H1 (cell line): ENCODE measurements at regions of chr12 and their contacts with region 1.

Region 1: DNA sequence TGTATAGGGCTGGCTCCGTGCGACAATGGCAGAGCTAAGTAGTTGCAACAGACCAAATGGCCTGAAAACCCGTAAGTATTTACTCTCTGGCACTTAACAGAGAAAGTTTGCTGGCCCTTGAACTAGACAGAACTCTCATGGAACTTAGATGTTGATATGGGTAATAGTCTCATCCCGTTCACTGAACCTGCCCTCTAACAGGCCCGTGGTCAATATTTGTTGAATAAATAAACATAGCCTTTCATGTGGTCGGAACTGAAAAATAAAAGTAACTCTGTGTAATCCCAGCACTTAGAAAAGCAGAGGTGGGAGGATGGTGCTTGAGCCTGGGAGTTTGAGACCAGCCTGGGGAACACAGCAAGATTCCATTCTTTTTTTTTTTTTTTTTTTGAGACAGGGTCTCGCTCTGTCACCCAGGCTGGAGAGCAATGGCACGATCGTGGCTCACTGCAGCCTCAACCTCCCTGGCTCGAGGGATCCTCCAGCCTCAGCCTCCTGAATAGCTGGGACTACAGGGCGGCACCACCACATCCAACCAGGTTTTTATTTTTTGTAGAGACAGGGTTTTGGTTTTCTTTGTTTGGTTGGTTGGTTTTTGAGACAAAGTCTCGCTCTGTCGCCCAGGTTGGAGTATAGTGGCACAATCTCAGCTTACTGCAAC is 29.7 kb downstream of the KDM2B start:
- DNase-seq: no peak
- H3K4me3 ChIP-seq: no peak overlapping the region
- H3K27ac ChIP-seq: no peak overlapping the region
- H3K4me1 ChIP-seq: peaks cover 0 to 3% (median 0%) of the 10 kb centered on the region in 4 experiments; a peak in 1 of 7 replicates
- H3K27me3 ChIP-seq: no peaks in the 10 kb centered on the region
- CTCF ChIP-seq: no peak
- EP300 ChIP-seq: no peak
- POLR2A ChIP-seq: no peak
- RAD21 ChIP-seq: no peak

Region 2: GRCh38 chr12:121423682-121424623 is 127.2 kb before region 1 on chr12:
- CTCF ChIA-PET with region 1: no interaction called
- POLR2A ChIA-PET with region 1: no interaction called
- DNase-seq: no peak
- H3K4me3 ChIP-seq: no peak overlapping the region
- H3K27ac ChIP-seq: no peak overlapping the region
- H3K4me1 ChIP-seq: no peaks in the 10 kb centered on the region
- H3K27me3 ChIP-seq: no peaks in the 10 kb centered on the region
- CTCF ChIP-seq: no peak
- EP300 ChIP-seq: no peak
- POLR2A ChIP-seq: peak in 1 of 2 experiments; percentile 0; a peak in 1 of 3 replicates
- RAD21 ChIP-seq: no peak

Region 3: GRCh38 chr12:121467115-121467793 is 83.8 kb before region 1 on chr12:
- CTCF ChIA-PET with region 1: no interaction called
- POLR2A ChIA-PET with region 1: no interaction called
- DNase-seq: peak; percentile 41 to 86
- H3K4me3 ChIP-seq: peak overlapping the region; percentile 57 to 80 (median 64)
- H3K27ac ChIP-seq: peak overlapping the region; percentile 66; the same call in 1 of the 2 replicates
- H3K4me1 ChIP-seq: peaks cover 0 to 12% (median 2%) of the 10 kb centered on the region in 4 experiments; a peak in 4 of 7 replicates
- H3K27me3 ChIP-seq: peaks cover 0 to 6% (median 0%) of the 10 kb centered on the region in 4 experiments; a peak in 2 of 7 replicates
- CTCF ChIP-seq: no peak
- EP300 ChIP-seq: no peak
- POLR2A ChIP-seq: no peak
- RAD21 ChIP-seq: no peak

Region 4: DNA sequence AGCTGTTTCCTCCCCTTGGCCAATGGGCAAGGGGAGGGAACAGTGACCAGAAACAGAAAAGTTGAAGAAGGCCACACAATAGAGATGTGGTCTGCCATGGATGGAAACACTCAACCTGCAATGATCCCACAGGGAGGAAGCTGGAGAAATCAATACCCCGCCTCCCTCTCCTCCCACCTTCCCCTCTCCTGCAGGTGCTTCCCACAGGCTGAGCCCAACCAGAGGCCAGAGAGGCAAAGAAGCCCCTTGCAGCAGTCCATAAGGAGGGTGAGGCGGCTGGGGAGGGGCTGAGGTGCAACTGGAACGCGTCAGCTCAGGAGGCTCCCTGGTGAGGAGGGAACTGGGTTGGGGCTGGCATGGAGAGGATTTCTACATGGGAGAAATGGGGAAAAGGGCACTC is 67.2 kb before region 1 on chr12:
- CTCF ChIA-PET with region 1: interaction called, 11 read pairs
- POLR2A ChIA-PET with region 1: interaction called, 3 read pairs
- DNase-seq: no peak
- H3K4me3 ChIP-seq: no peak overlapping the region
- H3K27ac ChIP-seq: no peak overlapping the region
- H3K4me1 ChIP-seq: no peaks in the 10 kb centered on the region; a peak in 2 of 7 replicates
- H3K27me3 ChIP-seq: no peaks in the 10 kb centered on the region
- CTCF ChIP-seq: no peak
- EP300 ChIP-seq: no peak
- POLR2A ChIP-seq: no peak
- RAD21 ChIP-seq: no peak

Region 5: DNA sequence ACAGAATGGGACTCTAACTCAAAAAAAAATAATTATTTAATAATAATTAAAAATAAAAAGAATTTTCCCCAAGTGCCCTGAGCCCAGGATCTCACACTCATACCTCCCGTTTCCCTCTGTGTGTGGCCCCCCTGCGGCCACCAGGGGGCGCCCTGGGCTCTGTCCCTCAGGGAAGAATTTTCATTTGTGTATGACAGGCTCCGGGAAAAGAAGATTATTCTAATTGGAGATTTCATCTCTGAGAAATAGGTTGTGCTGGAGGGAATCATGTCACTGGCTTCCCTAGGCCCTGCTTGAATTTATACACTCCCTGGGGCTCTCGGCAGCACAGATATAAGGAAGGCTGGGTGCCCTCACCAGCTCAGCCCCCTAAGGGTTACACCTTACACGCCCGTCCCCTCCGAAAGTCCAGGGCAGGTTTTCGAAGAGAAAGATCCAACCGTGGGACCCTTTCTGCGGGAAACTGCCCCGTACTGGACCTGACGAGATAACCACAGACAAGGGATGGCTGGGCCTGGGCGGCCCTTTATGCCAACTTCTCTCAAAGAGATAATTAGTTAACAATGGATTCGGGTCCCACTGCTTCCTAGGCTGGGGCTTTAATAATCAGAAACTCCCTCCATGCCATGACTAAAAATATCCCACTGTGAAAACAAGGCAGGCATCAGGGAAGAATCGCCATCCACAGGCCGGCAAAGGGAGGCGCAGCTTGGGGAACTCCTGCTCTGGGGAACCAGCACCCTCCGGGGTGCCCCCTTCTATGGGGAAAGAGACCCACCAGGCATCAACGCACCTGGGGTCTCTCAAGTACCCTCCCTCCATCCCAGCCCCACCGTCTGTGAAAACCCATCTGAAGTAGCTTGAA is 50.9 kb before region 1 on chr12:
- CTCF ChIA-PET with region 1: interaction called, 11 read pairs
- POLR2A ChIA-PET with region 1: no interaction called
- DNase-seq: peak in 1 of 2 experiments; percentile 88
- H3K4me3 ChIP-seq: no peak overlapping the region
- H3K27ac ChIP-seq: 0 out of 2 replicates have a peak overlapping the region, but pooled peaks have one; percentile 16
- H3K4me1 ChIP-seq: no peaks in the 10 kb centered on the region
- H3K27me3 ChIP-seq: no peaks in the 10 kb centered on the region
- CTCF ChIP-seq: peak; percentile 63 to 84 (median 80)
- EP300 ChIP-seq: no peak
- POLR2A ChIP-seq: no peak
- RAD21 ChIP-seq: peak; percentile 49 to 63

Region 6: DNA sequence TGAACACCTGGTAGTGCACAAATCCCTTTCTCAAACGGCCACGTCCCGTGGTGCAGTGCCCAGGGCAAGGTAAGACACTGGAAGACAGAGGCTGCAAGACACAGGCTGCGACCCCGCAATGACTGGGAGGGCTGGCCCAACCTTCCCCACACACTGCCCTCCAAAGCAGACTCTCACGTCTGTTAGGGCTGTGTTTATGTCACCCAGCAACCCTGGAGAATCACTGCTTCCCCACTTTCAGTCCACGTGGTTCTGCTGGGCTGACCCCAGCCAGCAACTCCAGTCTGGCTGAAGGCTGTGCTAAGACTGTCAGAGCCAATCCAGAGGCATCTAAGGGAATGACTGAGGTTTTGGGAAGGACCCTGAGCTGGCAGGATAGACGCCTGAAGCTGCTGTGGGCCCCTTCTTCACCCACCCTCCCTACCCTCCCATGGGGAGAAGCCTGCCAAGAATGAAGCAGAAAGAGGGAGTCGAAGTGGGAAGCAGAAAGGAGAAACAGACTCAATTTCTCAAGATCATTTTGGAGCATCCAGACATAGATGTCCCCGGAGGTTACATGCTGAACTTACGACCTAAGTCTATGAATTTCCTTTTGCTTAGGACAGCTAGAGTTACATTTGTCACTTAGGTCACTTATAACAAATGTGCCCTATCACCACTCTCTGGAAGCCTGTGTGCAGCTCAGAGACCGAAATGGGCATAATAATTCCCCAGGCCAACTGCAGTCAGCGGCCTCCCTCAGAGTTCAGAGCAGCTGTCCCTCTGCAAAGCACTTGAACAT is 18.1 kb after region 1 on chr12:
- CTCF ChIA-PET with region 1: interaction called, 57 read pairs
- POLR2A ChIA-PET with region 1: interaction called, 793 read pairs
- DNase-seq: no peak
- H3K4me3 ChIP-seq: no peak overlapping the region
- H3K27ac ChIP-seq: no peak overlapping the region
- H3K4me1 ChIP-seq: no peaks in the 10 kb centered on the region
- H3K27me3 ChIP-seq: no peaks in the 10 kb centered on the region
- CTCF ChIP-seq: no peak
- EP300 ChIP-seq: no peak
- POLR2A ChIP-seq: no peak; a peak in 1 of 3 replicates
- RAD21 ChIP-seq: no peak

Region 7: DNA sequence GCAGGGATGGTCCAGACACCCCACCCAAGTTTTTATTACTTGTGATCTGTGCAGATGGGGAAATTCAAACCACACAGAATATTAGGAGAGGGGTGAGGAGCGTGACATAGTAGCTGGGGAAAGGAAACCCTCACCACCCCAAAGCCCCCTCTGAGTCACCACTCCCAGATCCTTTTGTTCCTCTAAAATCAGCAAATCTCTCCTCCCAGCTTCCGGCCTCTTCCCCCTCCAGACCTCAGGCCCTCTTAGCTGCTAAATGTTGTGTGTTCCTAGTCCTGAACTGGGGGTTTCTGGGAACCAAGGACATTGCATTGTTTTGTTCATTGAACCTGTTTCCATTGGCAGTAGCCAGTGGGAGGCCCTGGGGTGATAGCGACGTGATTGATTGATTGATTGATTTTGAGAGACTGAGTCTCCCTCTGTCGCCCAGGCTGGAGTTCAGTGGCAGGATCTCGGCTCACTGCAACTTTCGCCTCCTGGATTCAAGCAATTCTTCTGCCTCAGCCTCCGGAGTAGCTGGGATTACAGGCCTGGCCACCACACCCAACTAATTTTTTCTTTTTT is 69.3 kb after region 1 on chr12:
- CTCF ChIA-PET with region 1: interaction called, 50 read pairs
- POLR2A ChIA-PET with region 1: interaction called, 6 read pairs
- DNase-seq: peak in 1 of 2 experiments; percentile 29
- H3K4me3 ChIP-seq: no peak overlapping the region
- H3K27ac ChIP-seq: peak overlapping the region; percentile 16; the same call in 1 of the 2 replicates
- H3K4me1 ChIP-seq: peaks cover 0 to 8% (median 5%) of the 10 kb centered on the region in 4 experiments; a peak in 5 of 7 replicates
- H3K27me3 ChIP-seq: no peaks in the 10 kb centered on the region
- CTCF ChIP-seq: no peak
- EP300 ChIP-seq: no peak
- POLR2A ChIP-seq: no peak
- RAD21 ChIP-seq: no peak

Region 8: DNA sequence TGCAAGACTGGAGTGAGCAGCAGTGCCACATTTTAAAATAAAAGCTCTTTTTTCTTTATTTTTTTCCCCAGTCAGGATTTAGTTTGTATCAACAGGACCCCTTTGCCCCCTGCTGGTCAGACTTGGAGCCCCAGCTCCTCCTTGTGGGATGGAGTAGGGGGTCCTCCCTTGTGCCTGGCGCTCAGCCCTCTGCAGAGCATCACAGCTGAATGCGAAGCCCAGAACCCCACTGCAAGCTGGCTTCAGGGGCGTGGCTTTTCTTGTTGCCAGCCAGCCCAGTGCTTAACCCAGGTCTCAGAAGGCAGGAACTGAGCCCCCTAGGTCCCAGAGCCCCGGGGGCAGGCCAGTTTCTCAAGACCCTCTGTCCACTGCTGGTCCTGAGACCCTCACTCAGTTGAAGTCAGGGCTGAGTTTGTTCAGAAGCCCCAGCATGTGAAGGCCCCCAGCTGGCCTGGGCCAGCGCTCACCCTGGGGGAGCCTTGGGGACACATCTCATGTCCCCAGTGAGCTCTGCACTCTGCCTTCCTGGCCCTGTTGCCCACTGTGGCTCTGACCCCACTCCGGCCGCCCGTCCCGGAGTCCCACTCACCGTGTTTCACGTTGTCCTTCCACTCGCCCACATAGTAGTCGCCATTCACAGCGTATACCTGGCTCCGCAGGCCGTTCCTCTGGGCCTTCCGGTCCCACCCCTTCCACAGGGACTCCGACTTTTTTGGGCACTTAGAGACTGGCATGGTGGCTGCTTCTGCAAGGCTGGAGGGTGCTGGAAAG is 117.8 kb after region 1 on chr12:
- CTCF ChIA-PET with region 1: interaction called, 52 read pairs
- POLR2A ChIA-PET with region 1: interaction called, 12 read pairs
- DNase-seq: peak in 1 of 2 experiments; percentile 80
- H3K4me3 ChIP-seq: no peak overlapping the region
- H3K27ac ChIP-seq: no peak overlapping the region
- H3K4me1 ChIP-seq: peaks cover 0 to 18% (median 7%) of the 10 kb centered on the region in 4 experiments; a peak in 6 of 7 replicates
- H3K27me3 ChIP-seq: no peaks in the 10 kb centered on the region
- CTCF ChIP-seq: peak; percentile 52 to 62 (median 53)
- EP300 ChIP-seq: no peak
- POLR2A ChIP-seq: no peak
- RAD21 ChIP-seq: peak; percentile 52 to 70

Region 9: GRCh38 chr12:121678716-121679580 is 127.8 kb after region 1 on chr12:
- CTCF ChIA-PET with region 1: interaction called, 41 read pairs
- POLR2A ChIA-PET with region 1: interaction called, 8 read pairs
- DNase-seq: no peak
- H3K4me3 ChIP-seq: no peak overlapping the region
- H3K27ac ChIP-seq: no peak overlapping the region
- H3K4me1 ChIP-seq: peaks cover 0 to 4% (median 0%) of the 10 kb centered on the region in 4 experiments; a peak in 4 of 7 replicates
- H3K27me3 ChIP-seq: no peaks in the 10 kb centered on the region
- CTCF ChIP-seq: no peak
- EP300 ChIP-seq: no peak
- POLR2A ChIP-seq: no peak
- RAD21 ChIP-seq: no peak